AG04449 (cell line): ENCODE measurements at regions of chr2 and their contacts with region 1.

Region 1: DNA sequence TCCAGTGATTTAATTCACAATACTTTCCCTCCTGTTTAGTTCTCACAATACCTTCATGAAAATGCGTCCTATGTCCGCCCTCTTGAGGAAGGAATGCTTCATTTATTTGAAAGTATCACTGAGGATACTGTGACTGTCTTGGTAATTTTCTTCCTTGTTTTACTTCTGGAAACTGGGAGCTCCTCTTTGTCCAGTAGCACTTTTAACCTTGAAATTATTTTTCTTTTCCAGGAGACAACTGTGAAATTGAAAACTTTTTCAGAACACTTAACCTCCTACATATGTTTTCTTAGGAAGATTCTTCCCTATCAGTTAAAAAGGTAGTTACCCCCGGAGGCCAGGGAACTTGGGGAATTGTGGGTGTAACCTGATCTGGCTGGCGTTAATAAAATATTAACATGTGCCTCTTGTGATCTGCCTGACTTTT is 58.9 kb upstream of the STON1 start:
- DNase-seq: no peak
- H3K4me3 ChIP-seq: no peak overlapping the region
- CTCF ChIP-seq: peak; percentile 54

Region 2: GRCh38 chr2:48107326-48107925 is 363.6 kb before region 1 on chr2:
- CTCF ChIA-PET with region 1: interaction called, 14 read pairs
- POLR2A ChIA-PET with region 1: no interaction called
- DNase-seq: no peak
- H3K4me3 ChIP-seq: 0 out of 2 replicates have a peak overlapping the region, but pooled peaks have one; percentile 1
- CTCF ChIP-seq: peak; percentile 16

Region 3: GRCh38 chr2:48332286-48332685 is 138.8 kb before region 1 on chr2:
- CTCF ChIA-PET with region 1: no interaction called
- POLR2A ChIA-PET with region 1: no interaction called
- DNase-seq: no peak
- H3K4me3 ChIP-seq: no peak overlapping the region
- CTCF ChIP-seq: no peak

Region 4: GRCh38 chr2:48398285-48399002 is 72.6 kb before region 1 on chr2:
- CTCF ChIA-PET with region 1: no interaction called
- POLR2A ChIA-PET with region 1: no interaction called
- DNase-seq: no peak
- H3K4me3 ChIP-seq: no peak overlapping the region
- CTCF ChIP-seq: no peak

Region 5: DNA sequence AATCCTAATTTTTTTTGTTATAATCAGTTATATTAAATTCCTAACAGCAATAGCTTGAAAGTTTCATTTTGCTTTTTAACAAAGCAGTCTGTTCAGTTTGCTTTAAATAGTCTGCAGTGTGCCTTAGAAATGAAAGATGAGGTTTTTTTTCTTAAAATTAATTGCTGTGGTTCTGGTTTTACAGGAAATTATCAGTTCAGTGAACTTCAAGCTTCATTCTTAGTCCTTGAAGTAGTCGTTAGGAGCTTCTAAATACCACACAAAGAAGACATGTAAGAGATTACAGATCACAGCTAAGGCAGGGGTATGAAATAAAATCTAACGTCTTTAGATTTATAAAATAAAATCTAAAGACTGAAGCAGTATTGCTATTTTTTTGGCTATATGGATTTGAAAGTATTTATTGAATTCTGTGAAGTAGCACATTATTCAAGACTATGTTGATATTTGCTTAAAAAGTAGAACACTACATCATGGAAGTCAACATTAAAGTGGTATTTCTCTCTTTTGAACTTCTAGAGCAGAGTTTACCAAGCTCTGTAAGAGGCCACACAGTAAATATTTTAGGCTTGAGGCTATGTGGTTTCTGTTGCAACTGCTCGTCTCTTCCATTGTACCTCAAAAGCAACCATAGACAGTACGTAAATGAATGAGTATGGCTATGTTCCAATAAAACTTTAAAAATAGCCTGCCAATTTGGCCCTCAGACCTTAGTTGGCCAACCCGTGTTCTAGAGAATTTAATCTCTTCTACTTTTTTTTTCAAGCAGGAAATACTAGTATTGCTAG is 22.6 kb before region 1 on chr2:
- CTCF ChIA-PET with region 1: interaction called, 60 read pairs
- POLR2A ChIA-PET with region 1: no interaction called
- DNase-seq: peak; percentile 49
- H3K4me3 ChIP-seq: no peak overlapping the region
- CTCF ChIP-seq: no peak

Region 6: GRCh38 chr2:48482313-48482712 is 11.3 kb after region 1 on chr2:
- CTCF ChIA-PET with region 1: interaction called, 66 read pairs
- POLR2A ChIA-PET with region 1: interaction called, 3 read pairs
- DNase-seq: peak; percentile 42
- H3K4me3 ChIP-seq: no peak overlapping the region
- CTCF ChIP-seq: no peak

Region 7: GRCh38 chr2:48488545-48488944 is 17.5 kb after region 1 on chr2:
- CTCF ChIA-PET with region 1: interaction called, 66 read pairs
- POLR2A ChIA-PET with region 1: no interaction called
- DNase-seq: no peak
- H3K4me3 ChIP-seq: no peak overlapping the region
- CTCF ChIP-seq: no peak

Region 8: GRCh38 chr2:48566592-48567255 is 95.7 kb after region 1 on chr2:
- CTCF ChIA-PET with region 1: interaction called, 21 read pairs
- POLR2A ChIA-PET with region 1: no interaction called
- DNase-seq: no peak
- H3K4me3 ChIP-seq: no peak overlapping the region
- CTCF ChIP-seq: peak; percentile 37

Region 9: GRCh38 chr2:48589170-48589767 is 118.2 kb after region 1 on chr2:
- CTCF ChIA-PET with region 1: interaction called, 50 read pairs
- POLR2A ChIA-PET with region 1: no interaction called
- DNase-seq: no peak
- H3K4me3 ChIP-seq: no peak overlapping the region
- CTCF ChIP-seq: peak; percentile 61

Region 10: GRCh38 chr2:48991415-48992131 is 520.5 kb after region 1 on chr2:
- CTCF ChIA-PET with region 1: no interaction called
- POLR2A ChIA-PET with region 1: no interaction called
- DNase-seq: no peak
- H3K4me3 ChIP-seq: no peak overlapping the region
- CTCF ChIP-seq: no peak